Activated CD8-positive, alpha-beta T cell treated with anti-CD3 and anti-CD28 coated beads, Interleukin-2, amount 10 ng/mL, durations not matched to agents 7 days and 5 days (primary cell): ENCODE measurements at regions of chr2 and their contacts with region 1.

Region 1: GRCh38 chr2:174577967-174578589 is 19.5 kb downstream of the WIPF1 start:
- DNase-seq: peak; percentile 76
- ATAC-seq: peak; percentile 78
- H3K4me3 Mint-ChIP-seq: no peak overlapping the region
- H3K27ac Mint-ChIP-seq: no peak overlapping the region
- H3K4me1 Mint-ChIP-seq: peaks cover 64% of the 10 kb centered on the region
- H3K27me3 Mint-ChIP-seq: no peaks in the 10 kb centered on the region

Region 2: DNA sequence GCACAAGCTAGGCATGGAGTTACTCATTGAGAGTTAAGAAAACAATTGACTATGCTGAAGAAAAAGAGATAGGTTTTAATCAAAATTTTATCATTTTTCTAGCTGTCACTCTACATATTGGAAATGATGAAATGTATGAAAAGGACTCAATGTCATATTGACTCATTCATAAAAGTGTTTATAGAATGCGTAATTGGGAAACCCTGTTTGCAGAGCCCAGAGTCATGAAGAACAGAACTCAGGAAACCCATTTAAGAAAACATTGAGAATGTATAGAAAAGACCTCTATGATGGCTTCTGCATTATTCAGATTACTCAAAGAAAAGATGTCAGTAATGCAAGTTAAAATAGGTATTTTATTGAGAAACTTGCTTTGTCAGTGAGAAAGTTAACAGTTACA is 146.2 kb before region 1 on chr2:
- CTCF ChIA-PET with region 1: no interaction called
- POLR2A ChIA-PET with region 1: no interaction called
- DNase-seq: no peak
- ATAC-seq: no peak
- H3K4me3 Mint-ChIP-seq: no peak overlapping the region
- H3K27ac Mint-ChIP-seq: no peak overlapping the region
- H3K4me1 Mint-ChIP-seq: no peaks in the 10 kb centered on the region
- H3K27me3 Mint-ChIP-seq: no peaks in the 10 kb centered on the region

Region 3: GRCh38 chr2:174442546-174443510 is 135.2 kb before region 1 on chr2:
- CTCF ChIA-PET with region 1: no interaction called
- POLR2A ChIA-PET with region 1: no interaction called
- DNase-seq: no peak
- ATAC-seq: no peak
- H3K4me3 Mint-ChIP-seq: no peak overlapping the region
- H3K27ac Mint-ChIP-seq: no peak overlapping the region
- H3K4me1 Mint-ChIP-seq: no peaks in the 10 kb centered on the region
- H3K27me3 Mint-ChIP-seq: no peaks in the 10 kb centered on the region

Region 4: GRCh38 chr2:174553811-174554493 is 24.1 kb before region 1 on chr2:
- CTCF ChIA-PET with region 1: interaction called, 14 read pairs
- POLR2A ChIA-PET with region 1: interaction called, 3 read pairs
- DNase-seq: peak; percentile 51
- ATAC-seq: peak; percentile 58
- H3K4me3 Mint-ChIP-seq: peak overlapping the region; percentile 55
- H3K27ac Mint-ChIP-seq: peak overlapping the region; percentile 86
- H3K4me1 Mint-ChIP-seq: peaks cover 35% of the 10 kb centered on the region
- H3K27me3 Mint-ChIP-seq: no peaks in the 10 kb centered on the region

Region 5: GRCh38 chr2:174593574-174594203 is 15.6 kb after region 1 on chr2:
- CTCF ChIA-PET with region 1: interaction called, 198 read pairs
- POLR2A ChIA-PET with region 1: interaction called, 18 read pairs
- DNase-seq: peak; percentile 89
- ATAC-seq: peak; percentile 73
- H3K4me3 Mint-ChIP-seq: peak overlapping the region; percentile 80
- H3K27ac Mint-ChIP-seq: peak overlapping the region; percentile 97
- H3K4me1 Mint-ChIP-seq: peaks cover 47% of the 10 kb centered on the region
- H3K27me3 Mint-ChIP-seq: no peaks in the 10 kb centered on the region

Region 6: GRCh38 chr2:174603280-174603679 is 25.2 kb after region 1 on chr2:
- CTCF ChIA-PET with region 1: interaction called, 198 read pairs
- POLR2A ChIA-PET with region 1: interaction called, 18 read pairs
- DNase-seq: peak; percentile 68
- ATAC-seq: peak; percentile 54
- H3K4me3 Mint-ChIP-seq: no peak overlapping the region
- H3K27ac Mint-ChIP-seq: no peak overlapping the region
- H3K4me1 Mint-ChIP-seq: peaks cover 88% of the 10 kb centered on the region
- H3K27me3 Mint-ChIP-seq: no peaks in the 10 kb centered on the region

Region 7: GRCh38 chr2:174615871-174616436 is 37.9 kb after region 1 on chr2:
- CTCF ChIA-PET with region 1: interaction called, 19 read pairs
- POLR2A ChIA-PET with region 1: interaction called, 3 read pairs
- DNase-seq: no peak
- ATAC-seq: peak; percentile 45
- H3K4me3 Mint-ChIP-seq: peak overlapping the region; percentile 19
- H3K27ac Mint-ChIP-seq: peak overlapping the region; percentile 82
- H3K4me1 Mint-ChIP-seq: peaks cover 87% of the 10 kb centered on the region
- H3K27me3 Mint-ChIP-seq: no peaks in the 10 kb centered on the region

Region 8: GRCh38 chr2:174682578-174683391 is 104.7 kb after region 1 on chr2:
- CTCF ChIA-PET with region 1: interaction called, 183 read pairs
- POLR2A ChIA-PET with region 1: interaction called, 6 read pairs
- DNase-seq: peak; percentile 70
- ATAC-seq: peak; percentile 70
- H3K4me3 Mint-ChIP-seq: peak overlapping the region; percentile 81
- H3K27ac Mint-ChIP-seq: peak overlapping the region; percentile 88
- H3K4me1 Mint-ChIP-seq: peaks cover 70% of the 10 kb centered on the region
- H3K27me3 Mint-ChIP-seq: no peaks in the 10 kb centered on the region